ENCODE measurements at regions of chr3 and their contacts with region 1.

Region 1: GRCh38 chr3:149120051-149120972 is 9.1 kb upstream of the HPS3 start:
- DNase-seq: peak; percentile 67
- CTCF ChIP-seq: peak; percentile 68

Region 2: DNA sequence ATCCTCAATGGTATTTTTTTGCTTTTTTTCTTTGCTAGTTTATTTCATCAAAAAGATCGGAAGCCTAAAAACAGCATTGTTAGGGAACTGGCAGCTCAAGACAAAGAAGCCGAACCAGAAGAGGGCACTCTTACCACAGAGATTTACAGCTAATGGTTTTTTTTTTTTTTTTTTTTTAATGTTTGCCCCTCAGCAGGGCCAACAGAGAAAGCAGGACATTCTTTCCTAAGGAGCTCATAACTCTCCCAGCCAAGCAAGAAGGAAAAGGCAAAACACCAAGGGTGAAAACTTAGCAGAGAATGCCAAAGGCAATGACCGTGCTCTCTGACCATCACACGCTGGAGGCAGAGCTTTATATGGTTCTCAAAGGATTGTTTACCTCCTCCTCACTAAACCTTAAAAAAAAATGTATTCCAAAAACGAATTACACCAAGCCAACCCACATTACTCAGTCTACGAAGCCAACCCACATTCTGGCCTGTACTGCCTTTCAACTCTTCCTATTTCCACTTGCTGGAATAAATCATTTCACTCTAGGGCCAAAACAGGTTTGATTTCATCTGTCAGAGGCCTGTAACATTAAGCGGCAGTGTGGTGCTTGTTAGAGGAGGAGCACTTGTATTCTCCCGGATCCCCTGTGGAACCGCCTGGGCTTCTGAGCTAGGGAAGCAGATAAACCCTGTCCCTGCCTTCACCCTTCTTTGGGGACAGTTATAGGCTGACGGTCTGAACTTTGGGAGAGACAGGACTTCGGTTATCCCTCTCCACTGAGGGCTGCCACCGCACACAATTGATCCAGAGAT is 164.6 kb before region 1 on chr3:
- CTCF ChIA-PET with region 1: interaction called, 27 read pairs
- POLR2A ChIA-PET with region 1: no interaction called
- DNase-seq: peak; percentile 20
- CTCF ChIP-seq: peak; percentile 55

Region 3: DNA sequence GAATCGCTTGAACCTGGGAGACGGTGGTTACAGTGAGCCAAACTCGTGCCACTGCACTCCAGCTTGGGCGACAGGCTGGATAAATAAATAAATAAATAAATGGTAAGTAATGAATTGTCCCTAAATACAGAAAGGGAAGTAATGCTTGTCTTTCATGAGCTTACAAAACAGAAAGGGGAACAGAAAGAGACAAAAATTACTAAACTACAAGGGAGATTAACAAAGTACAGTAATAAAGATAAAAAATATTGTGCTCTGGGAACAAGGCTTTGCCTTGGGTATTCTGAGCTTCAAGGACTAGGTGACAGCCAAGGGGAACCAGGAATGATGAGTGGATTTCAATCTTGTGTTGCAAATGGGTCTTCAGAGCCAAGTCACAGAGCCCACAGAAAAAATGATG is 24.8 kb before region 1 on chr3:
- CTCF ChIA-PET with region 1: interaction called, 20 read pairs
- POLR2A ChIA-PET with region 1: no interaction called
- DNase-seq: peak; percentile 64
- CTCF ChIP-seq: no peak

Region 4: GRCh38 chr3:149134575-149134974 is 14.3 kb after region 1 on chr3:
- CTCF ChIA-PET with region 1: interaction called, 25 read pairs
- POLR2A ChIA-PET with region 1: no interaction called
- DNase-seq: no peak
- CTCF ChIP-seq: no peak

Region 5: GRCh38 chr3:149163066-149163465 is 42.8 kb after region 1 on chr3:
- CTCF ChIA-PET with region 1: no interaction called
- POLR2A ChIA-PET with region 1: no interaction called
- DNase-seq: no peak
- CTCF ChIP-seq: no peak

Region 6: DNA sequence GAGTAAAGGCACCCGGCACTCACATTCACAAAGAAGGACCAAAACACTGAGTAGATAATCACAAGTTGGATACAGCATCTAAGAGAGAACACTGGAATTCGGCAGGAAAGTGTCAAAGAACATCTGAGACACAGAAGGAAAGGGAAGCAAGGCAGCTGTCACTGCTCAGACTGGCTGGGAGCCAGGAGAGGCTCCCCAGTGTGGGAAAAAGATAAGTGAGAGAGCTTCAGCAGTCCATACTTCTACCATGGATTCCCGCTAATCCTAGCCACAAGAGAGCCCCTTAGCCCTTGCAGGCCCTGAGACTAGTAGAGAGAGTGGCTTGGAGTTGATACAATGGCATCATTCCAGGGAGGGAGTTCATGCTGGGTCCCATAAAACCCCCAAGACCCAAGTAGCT is 138.0 kb after region 1 on chr3:
- CTCF ChIA-PET with region 1: interaction called, 17 read pairs
- POLR2A ChIA-PET with region 1: no interaction called
- DNase-seq: no peak
- CTCF ChIP-seq: no peak

Region 7: DNA sequence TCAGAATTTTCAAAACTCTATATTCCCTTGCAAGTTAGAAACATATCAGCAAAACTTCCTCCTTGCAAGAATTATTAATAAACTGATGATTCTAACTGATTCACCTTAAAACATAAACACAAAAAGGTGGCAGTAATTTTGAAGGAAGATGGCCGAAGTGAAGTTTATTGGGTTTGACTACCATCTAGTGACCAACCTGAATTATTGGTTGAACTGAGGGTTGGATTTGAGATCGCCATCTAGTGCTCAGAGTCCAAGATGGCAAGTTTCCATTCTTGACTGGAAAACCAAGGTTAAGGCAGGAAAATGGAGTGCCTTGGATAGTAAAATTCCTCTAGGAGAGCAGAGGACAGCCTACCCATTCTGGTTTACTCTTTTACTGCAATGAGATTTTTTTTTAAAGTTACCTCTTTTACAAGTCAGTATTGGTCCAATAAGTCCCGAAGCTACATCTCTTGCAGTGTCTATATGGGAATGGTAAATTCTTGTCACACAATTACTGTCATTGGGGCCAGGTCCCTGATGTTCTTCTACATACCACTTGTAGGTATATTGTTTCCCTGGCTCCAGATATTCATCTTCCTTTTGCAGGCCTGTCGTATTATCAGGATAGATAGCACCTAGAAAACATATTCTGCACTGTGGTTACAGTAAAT is 152.9 kb after region 1 on chr3:
- CTCF ChIA-PET with region 1: interaction called, 154 read pairs
- POLR2A ChIA-PET with region 1: no interaction called
- DNase-seq: peak; percentile 61
- CTCF ChIP-seq: peak; percentile 95